Naive thymus-derived CD4-positive, alpha-beta T cell (primary cell): ENCODE measurements at regions of chr3 and their contacts with region 1.

Region 1: DNA sequence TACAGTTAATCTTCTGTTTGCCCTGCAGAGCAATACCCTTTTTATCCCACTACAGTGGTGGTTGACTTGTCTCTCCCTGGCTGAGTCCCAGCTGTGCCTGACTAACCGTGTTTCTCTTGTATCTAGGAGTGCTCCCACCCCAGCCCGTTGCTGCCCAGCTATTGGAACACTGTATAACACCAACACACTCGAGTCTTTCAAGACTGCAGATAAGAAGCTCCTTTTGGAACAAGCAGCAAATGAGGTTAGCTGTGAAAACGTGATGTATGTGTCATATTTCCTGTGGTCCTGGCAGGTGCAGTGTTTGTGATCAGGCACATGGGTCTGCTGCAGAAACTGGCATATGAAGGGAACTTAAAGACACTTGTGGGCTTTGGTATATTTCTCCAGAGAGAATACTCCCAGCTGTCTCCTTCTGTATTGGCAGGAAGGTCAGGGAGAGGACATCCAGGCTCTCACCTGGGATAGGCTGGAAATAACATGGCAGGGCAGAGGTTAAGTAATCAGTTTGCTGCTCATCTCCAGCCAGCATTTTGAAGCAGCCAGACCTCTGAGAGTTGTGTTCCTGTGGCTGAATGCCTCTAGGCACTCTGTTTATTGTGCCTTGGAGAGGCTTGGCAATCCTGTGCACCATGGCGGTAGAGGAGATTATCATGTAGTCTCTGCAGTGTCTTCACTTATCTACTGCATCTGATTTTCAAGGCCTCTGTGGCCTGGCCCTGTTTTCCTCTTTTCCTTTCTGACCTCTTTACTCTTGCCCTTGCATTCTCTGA is 34.8 kb downstream of the ATG7 start:
- DNase-seq: peak in 1 of 9 donors; percentile 23
- ATAC-seq: peak; percentile 73
- H3K4me3 ChIP-seq: no peak overlapping the region
- H3K4me3 Mint-ChIP-seq: peak overlapping the region in 1 of 10 donors; percentile 56
- H3K27ac ChIP-seq: no peak overlapping the region
- H3K27ac Mint-ChIP-seq: peak overlapping the region in 5 of 9 donors; percentile 6 to 78 (median 55)
- H3K4me1 ChIP-seq: peaks cover 0 to 18% of the 10 kb centered on the region in 2 donors
- H3K4me1 Mint-ChIP-seq: peaks cover 0 to 29% (median 8%) of the 10 kb centered on the region in 7 donors
- H3K27me3 ChIP-seq: no peaks in the 10 kb centered on the region
- H3K27me3 Mint-ChIP-seq: no peaks in the 10 kb centered on the region

Region 2: DNA sequence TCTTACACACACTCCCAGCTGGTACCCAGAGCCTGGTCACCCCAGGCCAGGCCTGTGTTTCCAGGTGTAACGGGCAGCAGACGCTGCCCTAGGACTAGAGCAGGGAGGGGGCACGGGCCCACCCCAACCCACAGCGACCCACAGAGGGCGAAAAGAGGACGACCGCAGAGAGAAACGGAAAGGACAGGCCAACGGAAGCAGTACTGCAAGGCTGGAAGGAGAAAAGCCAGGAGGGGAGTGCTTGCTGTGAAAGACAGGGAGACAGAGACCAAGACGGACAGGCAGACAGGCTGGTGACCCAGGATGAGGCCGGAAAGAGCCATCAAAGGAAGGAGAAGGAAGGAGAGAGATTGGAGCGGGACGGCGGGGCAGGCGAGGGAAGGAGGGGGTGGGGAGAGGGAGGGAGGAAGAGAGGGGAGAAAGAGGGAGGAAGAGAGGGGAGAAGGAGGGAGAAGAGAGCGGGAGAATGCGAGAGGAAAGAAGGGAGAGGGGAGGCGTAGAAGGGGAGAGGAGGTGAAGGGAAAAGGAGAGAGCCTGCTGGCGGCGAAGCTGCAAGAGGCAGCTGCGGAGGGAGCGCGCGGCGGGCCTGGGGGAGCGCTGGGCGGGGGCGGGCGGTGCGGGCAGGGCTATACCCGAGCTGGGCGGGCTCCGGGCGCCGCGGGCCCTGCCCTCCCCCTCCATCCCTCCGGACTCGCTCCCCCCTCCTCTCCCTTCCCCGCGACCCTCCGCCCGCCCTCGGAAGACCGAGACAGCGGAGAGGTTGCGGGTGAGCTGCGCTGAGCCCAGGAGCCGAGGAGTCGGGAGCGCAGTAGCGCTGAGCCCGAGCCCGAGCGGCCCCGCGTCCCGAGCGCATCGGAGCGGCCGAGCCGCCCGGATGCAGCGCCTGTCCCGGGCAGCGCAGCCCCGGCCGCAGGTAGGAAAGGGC is 314.7 kb before region 1 on chr3 and contains the start of gene SLC6A1:
- CTCF ChIA-PET with region 1: no interaction called
- POLR2A ChIA-PET with region 1: no interaction called
- intact Hi-C with region 1: no loop called
- DNase-seq: no peak
- ATAC-seq: no peak
- H3K4me3 ChIP-seq: no peak within 1 kb of the TSS
- H3K4me3 Mint-ChIP-seq: peak within 1 kb of the TSS in 9 of 10 donors; percentile 23 to 91 (median 66)
- H3K27ac ChIP-seq: no peak within 1 kb of the TSS
- H3K27ac Mint-ChIP-seq: no peak within 1 kb of the TSS
- H3K4me1 ChIP-seq: no peaks in the 10 kb centered on the region
- H3K4me1 Mint-ChIP-seq: peaks cover 5 to 14% (median 6%) of the 10 kb centered on the region in 7 donors
- H3K27me3 ChIP-seq: peaks cover 0 to 10% of the 10 kb centered on the region in 2 donors
- H3K27me3 Mint-ChIP-seq: peaks cover 56 to 74% (median 65%) of the 10 kb centered on the region in 5 donors
- total RNA-seq, gene SLC6A1: not detected

Region 3: GRCh38 chr3:11288786-11289682 is 18.0 kb before region 1 on chr3:
- CTCF ChIA-PET with region 1: no interaction called
- POLR2A ChIA-PET with region 1: no interaction called
- intact Hi-C with region 1: loop called in 1 of 2 experiments (anchors 2 kb)
- DNase-seq: no peak
- ATAC-seq: peak; percentile 77
- H3K4me3 ChIP-seq: no peak overlapping the region
- H3K4me3 Mint-ChIP-seq: peak overlapping the region in 2 of 10 donors; percentile 16 to 32
- H3K27ac ChIP-seq: peak overlapping the region; percentile 25
- H3K27ac Mint-ChIP-seq: peak overlapping the region; percentile 75 to 95 (median 82)
- H3K4me1 ChIP-seq: peaks cover 19 to 39% of the 10 kb centered on the region in 2 donors
- H3K4me1 Mint-ChIP-seq: peaks cover 42 to 63% (median 55%) of the 10 kb centered on the region in 7 donors
- H3K27me3 ChIP-seq: no peaks in the 10 kb centered on the region
- H3K27me3 Mint-ChIP-seq: no peaks in the 10 kb centered on the region